ENCODE measurements at regions of chr10 and their contacts with region 1.

Region 1: GRCh38 chr10:130110246-130111112 is at the start of gene C10orf143:
- DNase-seq: peak; percentile 95
- CTCF ChIP-seq: peak; percentile 3

Region 2: DNA sequence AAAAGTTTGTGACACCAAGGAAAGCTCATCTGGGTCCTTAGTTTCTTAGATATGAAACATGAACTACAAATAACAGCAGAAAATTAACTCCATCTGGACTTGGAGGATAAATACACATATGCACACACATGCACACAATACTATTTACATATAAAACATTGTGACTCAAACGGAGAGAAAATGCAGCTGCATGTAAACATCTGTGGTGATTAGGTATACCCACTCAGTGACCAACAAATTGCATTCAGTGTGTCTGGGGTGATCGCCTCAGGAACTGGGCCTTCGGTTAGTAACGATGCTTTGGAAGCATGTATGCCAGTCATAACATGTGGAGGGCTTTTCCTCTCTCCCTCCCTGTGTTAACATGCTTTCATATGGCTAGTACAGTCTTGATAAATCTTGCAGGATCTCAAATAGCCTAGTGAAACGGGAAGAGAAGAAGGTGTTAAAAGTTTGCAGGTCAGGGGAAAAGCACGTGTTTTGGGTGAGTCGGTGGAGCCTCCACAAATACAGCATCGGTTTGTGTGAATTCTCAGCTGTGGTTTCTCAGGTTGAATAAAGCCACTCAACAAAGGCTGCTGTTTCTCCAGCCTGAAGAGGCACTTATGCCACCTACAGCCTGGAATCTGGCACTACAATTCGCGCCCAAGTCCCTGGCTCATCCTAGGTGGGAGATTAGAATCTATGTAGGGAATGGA is 17.0 kb after region 1 on chr10:
- CTCF ChIA-PET with region 1: interaction called, 51 read pairs
- POLR2A ChIA-PET with region 1: interaction called, 6 read pairs
- DNase-seq: peak; percentile 80
- CTCF ChIP-seq: peak; percentile 73

Region 3: DNA sequence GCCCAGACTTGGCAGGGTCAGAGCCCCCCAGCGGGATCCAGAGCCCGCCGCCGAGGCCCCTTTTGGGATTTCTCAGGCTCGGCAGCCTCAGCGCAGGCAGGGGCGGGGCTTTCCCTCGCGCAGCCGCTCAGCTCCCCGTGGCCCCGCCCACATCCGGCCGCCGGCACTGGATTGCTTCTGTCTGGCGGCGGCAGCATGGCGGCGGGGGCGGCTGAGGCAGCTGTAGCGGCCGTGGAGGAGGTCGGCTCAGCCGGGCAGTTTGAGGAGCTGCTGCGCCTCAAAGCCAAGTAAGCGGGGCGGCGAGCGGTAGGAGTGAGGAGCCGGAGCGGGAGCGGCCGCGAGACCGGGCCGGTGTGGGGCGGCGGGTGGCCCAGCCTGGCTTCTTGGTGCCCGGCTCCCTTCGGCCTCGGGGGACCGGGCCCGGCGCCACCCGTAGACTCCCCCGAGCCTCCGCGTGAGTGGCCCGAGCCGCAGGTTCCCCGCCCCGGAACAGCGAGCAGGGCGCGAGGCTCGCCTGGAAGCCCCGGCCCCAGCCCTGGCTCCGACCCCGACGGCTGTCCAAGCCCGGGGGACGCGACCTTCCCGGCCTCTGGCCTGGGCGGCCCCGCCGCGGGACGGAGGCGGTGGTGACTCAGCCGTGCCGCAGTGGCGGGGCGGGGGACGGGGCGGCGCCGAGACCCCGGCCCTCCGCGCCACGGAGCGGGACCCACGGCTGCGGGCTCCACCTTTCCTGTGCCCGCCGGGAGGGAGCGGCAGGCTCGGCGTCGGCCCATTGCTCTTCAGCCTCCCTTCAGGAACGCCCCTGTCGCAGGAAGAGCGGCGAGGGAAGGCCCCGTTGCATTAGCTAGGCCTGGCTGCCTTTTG is 26.0 kb after region 1 on chr10 and contains the start of gene GLRX3:
- CTCF ChIA-PET with region 1: interaction called, 24 read pairs
- POLR2A ChIA-PET with region 1: interaction called, 11 read pairs
- DNase-seq: peak; percentile 96
- CTCF ChIP-seq: no peak

Region 4: DNA sequence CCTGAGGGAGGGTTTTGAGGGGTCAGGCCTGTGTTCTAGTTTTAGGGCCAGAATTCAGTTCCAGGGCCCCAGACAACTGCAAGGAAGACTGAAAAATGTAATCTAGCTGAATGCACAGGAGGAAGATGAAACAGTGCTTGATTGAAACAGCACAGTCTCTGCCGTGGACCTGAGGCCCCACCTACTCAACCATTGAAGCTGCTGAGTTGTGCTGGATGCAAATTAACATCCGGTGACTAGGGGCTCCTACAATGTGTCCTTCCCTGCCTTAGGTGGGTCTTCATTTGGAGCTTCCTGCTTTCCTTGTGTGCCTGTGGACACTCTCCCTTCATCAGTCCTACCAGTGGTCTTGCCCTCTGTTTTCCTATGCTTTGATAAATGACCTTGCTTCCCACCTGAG is 31.4 kb after region 1 on chr10:
- CTCF ChIA-PET with region 1: interaction called, 24 read pairs
- POLR2A ChIA-PET with region 1: interaction called, 11 read pairs
- DNase-seq: peak; percentile 61
- CTCF ChIP-seq: no peak

Region 5: DNA sequence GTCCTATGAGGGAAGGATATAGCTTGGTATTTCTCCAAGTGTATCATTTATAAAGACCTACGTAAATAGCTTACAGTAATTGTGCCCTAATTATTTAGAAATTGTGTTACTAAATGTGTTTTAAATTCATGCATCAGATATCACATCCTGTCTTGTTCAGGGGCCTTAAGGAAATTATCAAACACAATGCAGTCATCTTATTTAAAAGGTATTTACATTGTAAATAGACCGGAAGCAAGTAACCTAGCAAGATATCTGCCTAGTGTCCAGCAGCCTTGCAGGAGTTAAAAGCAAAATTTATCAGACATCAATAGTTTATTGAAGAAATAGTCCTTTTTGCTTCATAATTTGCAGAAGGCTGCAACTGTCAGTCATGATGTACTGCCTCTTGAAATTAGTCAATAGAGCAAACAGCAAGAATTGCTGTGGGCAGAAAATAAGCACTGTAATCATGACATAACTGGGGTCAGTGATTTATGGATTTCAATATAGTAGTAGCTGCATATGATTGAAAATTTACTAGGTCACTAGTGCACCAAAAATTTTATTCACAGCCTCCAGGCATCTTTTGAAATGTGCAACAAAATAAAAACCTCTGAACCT is 48.8 kb after region 1 on chr10:
- CTCF ChIA-PET with region 1: interaction called, 14 read pairs
- POLR2A ChIA-PET with region 1: no interaction called
- DNase-seq: no peak
- CTCF ChIP-seq: no peak